Common myeloid progenitor, CD34-positive (primary cell): ENCODE measurements at regions of chr4 and their contacts with region 1.

Region 1: GRCh38 chr4:154526151-154526550 is 24.0 kb downstream of the PLRG1 start:
- DNase-seq: peak in 2 of 3 donors; percentile 43 to 50
- H3K4me3 ChIP-seq: no peak overlapping the region
- H3K27ac ChIP-seq: no peak overlapping the region
- H3K4me1 ChIP-seq: peaks cover 0 to 5% (median 0%) of the 10 kb centered on the region in 4 experiments
- H3K27me3 ChIP-seq: peaks cover 0 to 2% (median 0%) of the 10 kb centered on the region in 5 experiments

Region 2: DNA sequence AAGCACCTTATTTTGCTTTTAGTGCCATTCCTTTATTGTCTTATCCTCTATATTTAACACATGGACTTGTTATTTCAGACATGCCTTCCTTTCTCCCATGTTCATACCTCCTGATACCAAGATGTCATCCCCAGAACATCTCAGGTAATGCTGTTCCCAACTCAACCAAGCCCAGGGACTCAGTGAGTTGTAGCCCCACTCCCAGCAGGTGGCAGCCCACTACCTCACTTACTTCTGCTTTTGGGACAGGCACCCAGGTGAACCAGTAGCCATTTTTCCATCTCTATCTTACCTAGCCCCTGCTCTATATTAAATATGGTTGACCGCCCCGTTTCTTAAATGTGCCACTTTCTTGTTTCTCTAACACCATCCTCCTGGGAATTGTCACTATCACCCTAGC is 233.6 kb before region 1 on chr4:
- CTCF ChIA-PET with region 1: no interaction called
- POLR2A ChIA-PET with region 1: interaction called, 10 read pairs
- DNase-seq: peak in 1 of 3 donors; percentile 1
- H3K4me3 ChIP-seq: no peak overlapping the region
- H3K27ac ChIP-seq: no peak overlapping the region
- H3K4me1 ChIP-seq: no peaks in the 10 kb centered on the region
- H3K27me3 ChIP-seq: peaks cover 0 to 4% (median 0%) of the 10 kb centered on the region in 5 experiments

Region 3: GRCh38 chr4:154406018-154406795 is 119.9 kb before region 1 on chr4:
- CTCF ChIA-PET with region 1: no interaction called
- POLR2A ChIA-PET with region 1: no interaction called
- DNase-seq: peak in 2 of 3 donors; percentile 23 to 42
- H3K4me3 ChIP-seq: no peak overlapping the region
- H3K27ac ChIP-seq: no peak overlapping the region
- H3K4me1 ChIP-seq: no peaks in the 10 kb centered on the region
- H3K27me3 ChIP-seq: peaks cover 0 to 6% (median 0%) of the 10 kb centered on the region in 5 experiments

Region 4: GRCh38 chr4:154491341-154492271 is 34.5 kb before region 1 on chr4 and contains the start of gene DCHS2:
- CTCF ChIA-PET with region 1: no interaction called
- POLR2A ChIA-PET with region 1: no interaction called
- DNase-seq: peak; percentile 21 to 63 (median 57)
- H3K4me3 ChIP-seq: peak within 1 kb of the TSS in 6 of 7 experiments; percentile 32 to 73 (median 58)
- H3K27ac ChIP-seq: no peak within 1 kb of the TSS
- H3K4me1 ChIP-seq: peaks cover 0 to 28% (median 18%) of the 10 kb centered on the region in 4 experiments
- H3K27me3 ChIP-seq: peaks cover 10 to 94% (median 42%) of the 10 kb centered on the region in 5 experiments